CD4-positive, alpha-beta memory T cell (primary cell): ENCODE measurements at regions of chr5 and their contacts with region 1.

Region 1: GRCh38 chr5:149990518-149991376 is 9.7 kb downstream of the TIGD6 start:
- DNase-seq: peak; percentile 56 to 65 (median 60)
- H3K4me3 ChIP-seq: no peak overlapping the region
- H3K4me3 Mint-ChIP-seq: no peak overlapping the region
- H3K27ac ChIP-seq: no peak overlapping the region
- H3K27ac Mint-ChIP-seq: no peak overlapping the region
- H3K4me1 ChIP-seq: no peaks in the 10 kb centered on the region
- H3K4me1 Mint-ChIP-seq: peaks cover 0 to 2% (median under 1%) of the 10 kb centered on the region in 4 donors
- H3K27me3 ChIP-seq: no peaks in the 10 kb centered on the region
- H3K27me3 Mint-ChIP-seq: no peaks in the 10 kb centered on the region

Region 2: DNA sequence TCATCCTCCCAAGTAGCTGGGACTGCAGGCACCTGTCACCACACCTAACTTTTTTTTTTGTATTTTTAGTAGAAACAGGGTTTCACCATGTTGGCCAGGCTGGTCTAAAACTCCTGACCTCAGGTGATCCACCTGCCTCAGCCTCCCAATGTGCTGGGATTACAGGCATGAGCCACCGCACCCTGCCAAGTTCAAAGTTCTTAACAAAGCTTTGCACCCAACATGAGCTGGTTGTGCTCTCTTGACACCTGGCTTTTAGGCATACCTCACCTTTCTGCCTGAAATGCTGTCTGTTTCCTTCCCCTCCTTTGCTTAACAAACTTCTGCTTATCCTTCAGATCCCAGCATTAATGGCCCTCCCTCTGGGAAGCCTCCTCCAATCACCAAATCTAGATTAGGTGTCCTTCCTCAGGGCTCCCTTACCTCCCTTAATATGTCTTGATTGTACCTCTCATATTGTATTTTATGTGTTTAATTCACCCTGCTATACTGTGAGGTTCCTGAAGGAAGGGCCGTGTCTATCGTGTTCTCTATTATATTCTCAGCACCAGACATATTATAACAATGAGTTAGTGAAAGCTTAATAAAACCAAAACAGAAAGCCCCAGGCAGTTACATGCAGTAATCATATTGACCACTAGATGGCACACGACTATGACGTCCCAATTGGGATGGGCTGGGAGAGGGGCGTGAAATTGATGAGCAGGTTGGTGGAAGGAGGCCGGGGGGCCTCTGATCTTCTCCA is 323.5 kb before region 1 on chr5:
- CTCF ChIA-PET with region 1: interaction called, 8 read pairs
- POLR2A ChIA-PET with region 1: no interaction called
- intact Hi-C with region 1: loop called (anchors 1 kb)
- DNase-seq: peak in 1 of 5 donors; percentile 14
- H3K4me3 ChIP-seq: no peak overlapping the region
- H3K4me3 Mint-ChIP-seq: no peak overlapping the region
- H3K27ac ChIP-seq: no peak overlapping the region
- H3K27ac Mint-ChIP-seq: no peak overlapping the region
- H3K4me1 ChIP-seq: no peaks in the 10 kb centered on the region
- H3K4me1 Mint-ChIP-seq: no peaks in the 10 kb centered on the region
- H3K27me3 ChIP-seq: no peaks in the 10 kb centered on the region
- H3K27me3 Mint-ChIP-seq: peaks cover 0 to 2% of the 10 kb centered on the region in 2 donors

Region 3: GRCh38 chr5:149834246-149834855 is 156.4 kb before region 1 on chr5:
- CTCF ChIA-PET with region 1: interaction called, 167 read pairs
- POLR2A ChIA-PET with region 1: interaction called, 10 read pairs
- intact Hi-C with region 1: loop called (anchors 1 kb)
- DNase-seq: peak; percentile 43 to 57 (median 49)
- H3K4me3 ChIP-seq: no peak overlapping the region
- H3K4me3 Mint-ChIP-seq: peak overlapping the region in 1 of 8 donors; percentile 28
- H3K27ac ChIP-seq: no peak overlapping the region
- H3K27ac Mint-ChIP-seq: no peak overlapping the region
- H3K4me1 ChIP-seq: no peaks in the 10 kb centered on the region
- H3K4me1 Mint-ChIP-seq: no peaks in the 10 kb centered on the region
- H3K27me3 ChIP-seq: no peaks in the 10 kb centered on the region
- H3K27me3 Mint-ChIP-seq: no peaks in the 10 kb centered on the region

Region 4: DNA sequence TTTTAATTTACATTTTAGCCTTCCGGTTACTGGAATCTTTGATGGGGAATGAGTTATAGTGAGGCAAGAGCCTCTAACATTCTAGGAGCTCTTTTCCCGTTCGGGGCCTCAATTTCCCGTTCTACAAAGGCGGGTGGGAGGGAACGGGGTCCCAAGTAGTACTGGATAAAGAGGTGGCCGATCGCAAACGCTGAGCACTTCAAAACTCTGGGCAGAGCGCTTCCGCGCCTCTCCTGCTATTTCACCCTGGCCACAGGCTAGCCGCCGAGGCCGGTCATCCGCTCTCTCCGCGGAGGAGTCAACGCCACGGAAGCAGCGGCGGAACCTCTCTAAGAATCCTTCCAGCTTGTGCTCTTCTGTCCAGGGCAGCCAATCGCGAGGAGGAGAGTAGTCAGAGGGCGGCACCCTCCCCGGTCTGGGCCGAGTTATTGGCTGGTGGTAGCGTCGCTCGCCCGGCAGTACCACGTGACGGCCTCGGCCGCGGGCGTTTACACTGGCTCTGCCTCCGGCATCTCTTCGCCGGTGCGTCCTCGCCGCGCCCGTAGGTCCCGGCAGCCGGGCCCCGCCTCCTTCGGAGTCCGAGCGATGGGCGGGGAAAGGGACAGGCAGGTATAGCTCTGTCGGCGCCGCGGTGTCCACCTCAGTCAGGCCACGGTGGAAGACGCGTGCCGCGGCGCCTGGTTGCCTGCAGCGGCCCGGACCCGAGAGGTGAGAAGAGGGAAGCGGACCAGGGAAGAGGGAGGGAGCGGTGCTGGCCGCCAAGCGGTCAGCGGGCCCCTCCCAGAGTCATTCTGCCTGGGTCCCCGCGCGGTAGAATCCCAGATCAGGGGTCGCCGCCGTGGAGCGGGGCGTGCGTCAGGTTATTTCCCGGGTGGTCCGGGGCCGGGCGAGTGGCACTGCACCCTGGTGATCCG is 30.2 kb before region 1 on chr5 and contains the start of gene SLC26A2:
- CTCF ChIA-PET with region 1: interaction called, 51 read pairs
- POLR2A ChIA-PET with region 1: interaction called, 3 read pairs
- intact Hi-C with region 1: no loop called
- DNase-seq: peak; percentile 90 to 96 (median 91)
- H3K4me3 ChIP-seq: peak within 1 kb of the TSS; percentile 80 to 84
- H3K4me3 Mint-ChIP-seq: peak within 1 kb of the TSS; percentile 93 to 99 (median 98)
- H3K27ac ChIP-seq: peak within 1 kb of the TSS; percentile 72
- H3K27ac Mint-ChIP-seq: peak within 1 kb of the TSS; percentile 91 to 100 (median 98)
- H3K4me1 ChIP-seq: peaks cover 27% of the 10 kb centered on the region
- H3K4me1 Mint-ChIP-seq: peaks cover 27 to 37% (median 30%) of the 10 kb centered on the region in 4 donors
- H3K27me3 ChIP-seq: no peaks in the 10 kb centered on the region
- H3K27me3 Mint-ChIP-seq: no peaks in the 10 kb centered on the region
- total RNA-seq, gene SLC26A2: 14.2 to 14.3 TPM

Region 5: DNA sequence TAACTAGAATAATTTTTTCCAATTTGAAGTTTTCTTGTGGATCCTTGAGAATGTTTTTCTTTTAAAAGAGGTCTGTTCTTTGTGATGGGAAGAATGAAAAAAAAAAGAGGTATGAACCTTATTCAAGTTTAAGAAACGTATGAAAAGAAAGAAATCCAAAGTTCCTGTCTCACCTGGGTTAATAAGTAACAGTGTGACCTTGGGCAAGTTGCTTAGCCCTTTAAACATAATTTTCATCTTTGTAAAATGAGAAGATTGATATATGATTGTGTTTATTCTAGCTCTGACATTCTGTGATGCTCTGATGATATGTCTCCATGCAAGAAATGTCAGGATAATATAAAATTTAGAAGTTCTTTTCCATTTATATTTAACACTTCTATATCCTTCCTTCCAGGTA is 10.9 kb before region 1 on chr5:
- CTCF ChIA-PET with region 1: interaction called, 20 read pairs
- POLR2A ChIA-PET with region 1: no interaction called
- intact Hi-C with region 1: no loop called
- DNase-seq: no peak
- H3K4me3 ChIP-seq: no peak overlapping the region
- H3K4me3 Mint-ChIP-seq: no peak overlapping the region
- H3K27ac ChIP-seq: no peak overlapping the region
- H3K27ac Mint-ChIP-seq: no peak overlapping the region
- H3K4me1 ChIP-seq: no peaks in the 10 kb centered on the region
- H3K4me1 Mint-ChIP-seq: peaks cover 0 to 4% (median under 1%) of the 10 kb centered on the region in 4 donors
- H3K27me3 ChIP-seq: no peaks in the 10 kb centered on the region
- H3K27me3 Mint-ChIP-seq: no peaks in the 10 kb centered on the region